ENCODE measurements at regions of chr20 and their contacts with region 1.

Region 1: DNA sequence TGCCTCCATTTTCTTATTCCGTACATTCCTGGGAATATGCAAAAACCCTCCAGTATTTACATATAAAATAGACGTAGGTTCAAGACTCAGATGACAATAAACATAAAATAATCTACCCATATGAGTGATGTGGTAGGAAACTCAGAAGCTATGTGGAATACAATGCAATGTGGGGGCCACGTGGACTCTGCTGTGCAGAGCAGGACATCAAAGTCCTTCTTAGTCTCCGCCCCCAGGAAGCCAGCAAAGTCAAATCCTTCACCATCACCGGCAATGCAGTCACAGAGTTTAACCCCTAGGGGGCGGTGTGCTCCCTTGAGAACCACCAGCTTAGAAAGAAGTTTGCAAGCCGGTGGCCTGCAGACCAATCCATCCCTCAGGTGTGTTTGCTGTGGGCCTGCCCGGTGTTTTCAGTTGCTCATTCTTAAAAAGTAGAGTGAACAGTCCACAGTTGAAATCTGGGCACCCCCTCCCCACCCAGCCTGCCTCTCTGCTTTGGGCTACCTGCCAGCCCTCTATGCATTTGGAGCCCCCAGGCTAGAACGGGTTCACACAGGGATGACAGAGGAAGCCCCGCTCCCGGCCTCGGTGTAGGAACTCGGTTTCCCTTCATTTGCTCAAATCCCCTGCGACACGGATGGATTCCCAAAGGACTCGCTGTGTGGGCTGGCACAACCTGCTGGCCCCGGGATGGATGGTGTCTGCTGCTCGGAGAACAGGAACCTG is 59.9 kb downstream of the SULF2 start:
- DNase-seq: peak; percentile 63
- ATAC-seq: peak; percentile 87
- H3K4me3 ChIP-seq: no peak overlapping the region
- H3K27ac ChIP-seq: no peak overlapping the region
- H3K4me1 ChIP-seq: peaks cover 21% of the 10 kb centered on the region
- H3K27me3 ChIP-seq: no peaks in the 10 kb centered on the region
- CTCF ChIP-seq: peak; percentile 84 to 95 (median 84)
- EP300 ChIP-seq: no peak
- POLR2A ChIP-seq: no peak
- RAD21 ChIP-seq: peak; percentile 85

Region 2: GRCh38 chr20:47713878-47714450 is 11.4 kb before region 1 on chr20:
- CTCF ChIA-PET with region 1: interaction called, 27 read pairs
- POLR2A ChIA-PET with region 1: no interaction called
- RAD21 ChIA-PET with region 1: interaction called, 3 read pairs
- SMC1A ChIA-PET with region 1: interaction called, 3 read pairs
- in situ Hi-C with region 1: no loop called
- intact Hi-C with region 1: no loop called
- DNase-seq: no peak
- ATAC-seq: no peak
- H3K4me3 ChIP-seq: no peak overlapping the region
- H3K27ac ChIP-seq: no peak overlapping the region
- H3K4me1 ChIP-seq: peaks cover 21% of the 10 kb centered on the region
- H3K27me3 ChIP-seq: no peaks in the 10 kb centered on the region
- CTCF ChIP-seq: no peak
- EP300 ChIP-seq: no peak
- POLR2A ChIP-seq: no peak
- RAD21 ChIP-seq: no peak

Region 3: DNA sequence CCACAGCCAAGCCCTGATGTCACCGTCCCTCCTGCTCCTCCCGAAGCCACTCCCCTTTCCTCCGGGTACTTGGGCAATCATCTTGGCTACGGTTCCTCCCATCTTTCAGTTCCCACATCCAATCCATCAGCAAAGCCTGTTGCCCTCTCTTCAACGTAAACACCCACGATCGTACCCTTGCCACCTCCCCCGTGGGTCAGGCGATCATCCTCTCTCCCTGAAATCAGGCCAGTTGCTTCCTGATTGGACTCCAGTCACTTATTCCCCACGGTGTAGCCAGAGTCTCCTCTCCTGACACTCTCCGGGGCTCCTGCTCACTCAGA is 15.4 kb after region 1 on chr20:
- CTCF ChIA-PET with region 1: interaction called, 10 read pairs
- POLR2A ChIA-PET with region 1: no interaction called
- RAD21 ChIA-PET with region 1: no interaction called
- SMC1A ChIA-PET with region 1: no interaction called
- in situ Hi-C with region 1: no loop called
- intact Hi-C with region 1: no loop called
- DNase-seq: no peak
- ATAC-seq: no peak
- H3K4me3 ChIP-seq: no peak overlapping the region
- H3K27ac ChIP-seq: no peak overlapping the region
- H3K4me1 ChIP-seq: no peaks in the 10 kb centered on the region
- H3K27me3 ChIP-seq: no peaks in the 10 kb centered on the region; a peak in 1 of 4 replicates
- CTCF ChIP-seq: no peak
- EP300 ChIP-seq: no peak
- POLR2A ChIP-seq: no peak
- RAD21 ChIP-seq: no peak

Measured in GM12878 (cell line).